ENCODE measurements at regions of chr11 and their contacts with region 1.

Region 1: DNA sequence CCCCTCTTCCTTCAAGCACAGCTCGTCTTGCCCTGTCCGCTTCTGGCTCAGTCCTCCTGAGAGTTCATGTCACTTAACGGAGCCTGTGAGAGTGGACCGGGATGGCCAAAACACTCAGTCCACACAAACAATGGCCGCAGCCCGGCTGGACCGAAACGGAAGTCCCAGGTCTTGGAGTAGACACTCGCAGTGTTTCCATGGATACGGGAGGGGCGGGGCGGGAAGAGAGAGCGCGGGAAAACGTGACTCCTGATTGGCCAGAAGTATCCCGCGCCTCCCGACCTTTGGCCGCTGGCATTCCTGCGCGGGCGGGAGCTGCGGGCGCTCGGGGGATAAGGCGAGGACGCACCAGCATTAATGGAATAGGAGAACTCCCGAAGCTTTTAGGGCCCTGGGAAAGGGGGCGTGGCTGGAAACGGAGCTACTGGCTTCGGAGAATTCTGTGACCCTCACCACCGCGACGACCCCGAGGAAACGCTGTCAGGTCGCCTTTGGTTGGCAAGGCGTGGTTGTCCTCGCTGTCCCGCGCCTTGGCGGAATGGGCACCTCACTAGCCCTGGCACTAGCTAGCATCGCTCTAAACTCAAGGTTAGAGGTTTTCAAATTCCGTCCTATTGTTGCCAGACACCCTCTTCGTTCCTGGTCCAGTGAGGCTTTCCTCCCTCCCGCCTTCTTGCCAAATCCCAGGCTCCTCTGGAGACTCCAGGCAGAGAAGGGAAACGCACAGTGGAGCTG is at the starts of genes NLRP14 and ZNF214:
- DNase-seq: peak; percentile 69 to 84
- ATAC-seq: peak; percentile 94 to 96
- H3K4me3 ChIP-seq: peak within 1 kb of the TSS; percentile 59 to 70 (median 64)
- H3K27ac ChIP-seq: peak within 1 kb of the TSS; percentile 11 to 54 (median 22)
- H3K4me1 ChIP-seq: peaks cover 7 to 8% of the 10 kb centered on the region in 2 donors
- H3K27me3 ChIP-seq: no peaks in the 10 kb centered on the region
- CTCF ChIP-seq: no peak
- POLR2A ChIP-seq: no peak
- total RNA-seq, gene NLRP14: not detected
- total RNA-seq, gene ZNF214: 0.75 to 2.0 (median 1.2) TPM

Region 2: DNA sequence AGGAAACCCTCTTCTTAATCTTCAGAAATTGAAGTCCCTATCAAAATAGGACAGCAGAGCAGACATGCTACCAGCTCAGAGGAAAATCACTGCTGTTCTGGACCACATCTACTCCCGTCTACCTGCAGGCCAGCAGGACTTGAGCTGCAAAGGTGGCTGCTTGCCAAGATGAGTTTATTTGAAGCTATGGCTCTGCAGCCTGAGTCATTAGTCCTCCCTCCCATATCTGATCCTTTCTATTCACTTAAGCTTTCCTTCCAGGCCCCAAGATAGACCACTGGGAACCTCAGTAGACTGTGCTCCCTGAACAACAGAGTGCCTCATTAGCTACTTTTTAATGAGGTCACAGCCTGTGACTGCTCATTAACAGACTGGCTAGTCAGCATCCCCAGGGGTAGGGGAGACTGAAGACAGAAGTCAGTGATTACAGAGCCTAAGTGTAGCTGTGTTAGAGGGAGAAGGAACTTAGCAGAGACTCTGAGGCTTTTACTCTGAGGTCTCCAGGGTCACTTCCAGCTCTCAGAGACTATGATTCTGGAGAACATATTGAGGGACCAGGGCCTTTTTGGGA is 164.3 kb before region 1 on chr11:
- in situ Hi-C with region 1: no loop called
- intact Hi-C with region 1: no loop called
- DNase-seq: no peak
- ATAC-seq: no peak
- H3K4me3 ChIP-seq: no peak overlapping the region
- H3K27ac ChIP-seq: no peak overlapping the region
- H3K4me1 ChIP-seq: no peaks in the 10 kb centered on the region
- H3K27me3 ChIP-seq: no peaks in the 10 kb centered on the region
- CTCF ChIP-seq: no peak
- POLR2A ChIP-seq: no peak

Region 3: DNA sequence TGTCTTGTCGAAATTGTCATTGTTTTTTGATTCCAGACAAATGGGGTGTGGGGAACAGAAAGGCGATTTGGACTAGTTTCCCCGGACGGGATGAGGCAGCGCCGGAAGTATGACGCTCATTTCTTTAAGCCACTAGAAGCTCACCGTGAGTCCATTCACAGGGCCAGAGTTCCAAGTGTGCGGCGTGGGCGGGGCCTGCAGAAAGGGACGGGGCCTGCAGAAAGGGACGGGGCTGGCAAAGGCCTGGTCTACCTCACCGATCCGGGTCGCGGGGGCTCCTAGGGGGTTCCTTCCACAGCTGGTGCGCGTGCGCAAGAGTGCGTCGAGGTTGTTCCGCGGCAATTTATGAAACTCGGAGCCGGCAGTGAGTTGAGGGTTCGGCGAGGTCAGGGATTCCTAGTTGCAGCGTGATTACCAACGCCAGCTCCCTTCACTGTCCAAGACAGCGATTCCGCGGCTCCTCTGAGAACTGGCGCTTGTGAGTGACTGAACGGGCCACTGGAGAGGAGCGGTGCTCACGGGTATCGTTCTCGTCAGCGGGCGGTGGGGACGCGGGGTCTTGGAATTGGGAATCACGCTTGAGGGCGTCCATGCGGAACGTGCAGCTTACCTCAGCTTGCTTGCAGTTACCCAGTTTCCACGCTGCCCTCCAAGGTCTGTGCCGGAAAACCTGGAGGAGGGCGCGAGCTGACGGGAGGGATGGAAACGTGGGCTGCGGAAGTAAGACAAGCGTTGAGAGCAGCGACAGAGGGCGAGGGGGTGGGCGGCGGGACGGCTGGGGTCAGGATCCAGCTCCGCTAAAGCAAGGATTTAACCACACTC is 93.9 kb before region 1 on chr11 and contains the start of gene ZNF215:
- in situ Hi-C with region 1: no loop called
- intact Hi-C with region 1: loop called (anchors 5 kb)
- DNase-seq: peak; percentile 19 to 37
- ATAC-seq: peak; percentile 33 to 56
- H3K4me3 ChIP-seq: peak within 1 kb of the TSS; percentile 57 to 68 (median 64)
- H3K27ac ChIP-seq: peak within 1 kb of the TSS; percentile 23 to 51 (median 44)
- H3K4me1 ChIP-seq: peaks cover 0 to 7% of the 10 kb centered on the region in 2 donors
- H3K27me3 ChIP-seq: no peaks in the 10 kb centered on the region
- CTCF ChIP-seq: no peak
- POLR2A ChIP-seq: no peak
- total RNA-seq, gene ZNF215: 0.36 to 0.44 (median 0.39) TPM in 3 of 4 donors, not detected in the other

Region 4: GRCh38 chr11:6992457-6993417 is 27.6 kb before region 1 on chr11:
- in situ Hi-C with region 1: no loop called
- intact Hi-C with region 1: loop called (anchors 2 kb)
- DNase-seq: peak in 1 of 2 donors; percentile 10
- ATAC-seq: peak; percentile 85 to 97
- H3K4me3 ChIP-seq: no peak overlapping the region
- H3K27ac ChIP-seq: peak overlapping the region; percentile 23 to 73 (median 70)
- H3K4me1 ChIP-seq: peaks cover 6 to 13% of the 10 kb centered on the region in 2 donors
- H3K27me3 ChIP-seq: no peaks in the 10 kb centered on the region
- CTCF ChIP-seq: no peak
- POLR2A ChIP-seq: no peak

Region 5: GRCh38 chr11:7072401-7073028 is 52.2 kb after region 1 on chr11:
- in situ Hi-C with region 1: no loop called
- intact Hi-C with region 1: no loop called
- DNase-seq: no peak
- ATAC-seq: no peak
- H3K4me3 ChIP-seq: no peak overlapping the region
- H3K27ac ChIP-seq: no peak overlapping the region
- H3K4me1 ChIP-seq: no peaks in the 10 kb centered on the region
- H3K27me3 ChIP-seq: no peaks in the 10 kb centered on the region
- CTCF ChIP-seq: no peak
- POLR2A ChIP-seq: no peak

Measured in gastrocnemius medialis (tissue), 4 donors.